PC-3 (cell line): ENCODE measurements at regions of chr1 and their contacts with region 1.

Region 1: DNA sequence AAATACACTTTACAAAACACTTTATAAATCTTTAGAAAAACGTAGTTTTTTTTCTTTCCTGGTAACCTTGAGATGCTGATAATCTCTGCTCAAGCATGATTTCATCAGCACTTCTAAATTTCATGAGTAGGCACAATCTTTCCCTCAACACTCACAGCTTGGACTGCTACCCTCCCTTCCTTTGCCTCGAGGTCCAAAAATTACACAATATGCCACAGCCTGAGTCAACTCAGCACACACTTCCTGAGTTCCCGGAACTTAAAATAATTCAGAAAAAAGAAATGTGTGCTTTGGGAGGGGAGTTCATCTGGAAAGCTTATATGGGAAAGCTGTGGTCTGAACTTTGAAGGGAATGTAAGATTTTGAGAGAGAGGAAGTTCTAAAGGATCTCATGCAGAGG is 5.9 kb downstream of the CLCA2 start:
- DNase-seq: peak; percentile 94
- ATAC-seq: peak; percentile 88
- H3K4me3 ChIP-seq: peak overlapping the region; percentile 49
- H3K27ac ChIP-seq: peak overlapping the region; percentile 98
- H3K4me1 ChIP-seq: peaks cover 44% of the 10 kb centered on the region
- H3K27me3 ChIP-seq: no peaks in the 10 kb centered on the region
- CTCF ChIP-seq: no peak

Region 2: GRCh38 chr1:86119214-86119764 is 310.5 kb before region 1 on chr1:
- CTCF ChIA-PET with region 1: no interaction called
- POLR2A ChIA-PET with region 1: no interaction called
- intact Hi-C with region 1: no loop called
- DNase-seq: peak; percentile 8
- ATAC-seq: no peak
- H3K4me3 ChIP-seq: no peak overlapping the region
- H3K27ac ChIP-seq: no peak overlapping the region
- H3K4me1 ChIP-seq: no peaks in the 10 kb centered on the region
- H3K27me3 ChIP-seq: peaks cover 33% of the 10 kb centered on the region
- CTCF ChIP-seq: no peak

Region 3: GRCh38 chr1:86395771-86396497 is 33.9 kb before region 1 on chr1 and contains the start of gene ODF2L:
- CTCF ChIA-PET with region 1: no interaction called
- POLR2A ChIA-PET with region 1: no interaction called
- intact Hi-C with region 1: loop called (anchors 2 kb)
- DNase-seq: peak; percentile 84
- ATAC-seq: peak; percentile 99
- H3K4me3 ChIP-seq: peak within 1 kb of the TSS; percentile 95
- H3K27ac ChIP-seq: peak within 1 kb of the TSS; percentile 56
- H3K4me1 ChIP-seq: peaks cover 22% of the 10 kb centered on the region
- H3K27me3 ChIP-seq: no peaks in the 10 kb centered on the region
- CTCF ChIP-seq: no peak
- total RNA-seq, gene ODF2L: 18.3 and 21.8 TPM in 2 replicates

Region 4: GRCh38 chr1:86419277-86419903 is 10.4 kb before region 1 on chr1:
- CTCF ChIA-PET with region 1: interaction called, 3 read pairs
- POLR2A ChIA-PET with region 1: interaction called, 4 read pairs
- intact Hi-C with region 1: loop called (anchors 1 kb)
- DNase-seq: peak; percentile 64
- ATAC-seq: peak; percentile 37
- H3K4me3 ChIP-seq: no peak overlapping the region
- H3K27ac ChIP-seq: no peak overlapping the region
- H3K4me1 ChIP-seq: peaks cover 40% of the 10 kb centered on the region
- H3K27me3 ChIP-seq: no peaks in the 10 kb centered on the region
- CTCF ChIP-seq: peak; percentile 75

Region 5: DNA sequence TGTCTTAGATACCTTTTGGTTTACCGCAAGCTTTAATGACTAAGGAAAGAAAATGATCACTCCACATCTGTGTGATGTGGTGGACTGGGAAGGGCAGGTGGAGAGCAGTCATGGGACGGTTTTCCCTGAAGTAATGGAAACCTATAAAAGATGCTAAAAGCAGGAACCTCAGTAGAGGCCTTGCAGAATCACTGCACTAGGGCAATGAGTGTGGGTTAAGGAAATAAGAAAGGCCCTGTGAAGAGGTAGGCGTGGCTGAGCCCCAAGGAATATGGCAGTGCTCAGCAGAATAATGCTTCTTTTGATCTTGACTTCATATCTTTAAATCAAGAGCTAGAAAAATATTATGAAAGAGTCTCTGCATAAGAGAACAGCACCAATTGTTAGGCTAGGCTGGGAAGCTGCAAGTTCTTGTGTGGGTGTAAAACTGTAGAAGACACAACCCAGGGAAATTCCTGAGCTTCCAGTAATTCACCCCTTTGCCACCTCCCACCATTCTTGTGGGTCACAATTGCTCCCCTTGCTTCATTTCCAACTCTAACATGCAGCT is 167.0 kb after region 1 on chr1:
- CTCF ChIA-PET with region 1: no interaction called
- POLR2A ChIA-PET with region 1: no interaction called
- intact Hi-C with region 1: no loop called
- DNase-seq: no peak
- ATAC-seq: no peak
- H3K4me3 ChIP-seq: no peak overlapping the region
- H3K27ac ChIP-seq: no peak overlapping the region
- H3K4me1 ChIP-seq: no peaks in the 10 kb centered on the region
- H3K27me3 ChIP-seq: peaks cover 32% of the 10 kb centered on the region; the same call in 1 of the 2 replicates
- CTCF ChIP-seq: no peak